Motor neuron (in vitro differentiated cells): ENCODE measurements at regions of chr19 and their contacts with region 1.

Region 1: GRCh38 chr19:9075064-9075949 is 11.6 kb upstream of the OR1M1 start:
- ATAC-seq: peak; percentile 40 to 98 (median 91)
- H3K4me3 ChIP-seq: no peak overlapping the region
- H3K27ac ChIP-seq: peak overlapping the region in 1 of 2 donors; percentile 14
- H3K4me1 ChIP-seq: peaks cover 0 to 13% of the 10 kb centered on the region in 2 donors

Region 2: DNA sequence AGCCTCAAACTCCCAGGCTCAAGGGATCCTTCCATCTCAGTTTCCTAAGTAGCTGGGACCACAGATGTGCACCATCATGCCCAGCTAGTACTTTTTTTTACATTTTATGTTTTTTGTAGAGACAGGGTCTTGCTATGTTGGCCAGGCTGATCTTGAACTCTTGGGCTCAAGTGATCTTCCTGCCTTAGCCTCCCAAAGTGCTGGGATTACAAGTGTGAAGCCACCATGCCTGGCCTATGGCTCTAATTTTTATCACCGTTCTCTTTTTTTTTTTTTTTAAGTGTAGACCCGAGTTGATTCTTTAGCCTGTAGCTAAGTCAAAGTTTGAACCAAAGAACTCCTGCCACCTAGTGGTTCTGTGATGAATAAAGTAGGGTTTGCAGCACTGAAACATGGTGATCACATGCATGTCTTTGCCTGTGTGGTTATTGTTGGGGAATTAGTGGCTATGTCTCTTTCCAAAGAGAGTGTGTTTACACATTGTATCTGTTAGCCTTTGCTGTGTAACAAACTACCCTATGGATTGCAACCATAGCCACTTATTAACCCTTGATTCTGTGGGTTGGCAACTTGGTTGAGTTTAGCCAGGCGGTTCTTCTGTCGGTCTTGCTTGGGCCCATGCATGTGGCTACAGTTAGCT is 433.3 kb before region 1 on chr19:
- in situ Hi-C with region 1: loop called in 1 of 9 experiments (anchors 25 kb)
- ATAC-seq: peak in 3 of 8 experiments; percentile 34 to 78 (median 77)
- H3K4me3 ChIP-seq: no peak overlapping the region
- H3K27ac ChIP-seq: no peak overlapping the region
- H3K4me1 ChIP-seq: no peaks in the 10 kb centered on the region

Region 3: GRCh38 chr19:8654591-8655339 is 420.5 kb before region 1 on chr19:
- in situ Hi-C with region 1: loop called in 4 of 9 experiments (anchors 25 kb)
- ATAC-seq: peak; percentile 27 to 74 (median 62)
- H3K4me3 ChIP-seq: no peak overlapping the region
- H3K27ac ChIP-seq: no peak overlapping the region
- H3K4me1 ChIP-seq: no peaks in the 10 kb centered on the region

Region 4: DNA sequence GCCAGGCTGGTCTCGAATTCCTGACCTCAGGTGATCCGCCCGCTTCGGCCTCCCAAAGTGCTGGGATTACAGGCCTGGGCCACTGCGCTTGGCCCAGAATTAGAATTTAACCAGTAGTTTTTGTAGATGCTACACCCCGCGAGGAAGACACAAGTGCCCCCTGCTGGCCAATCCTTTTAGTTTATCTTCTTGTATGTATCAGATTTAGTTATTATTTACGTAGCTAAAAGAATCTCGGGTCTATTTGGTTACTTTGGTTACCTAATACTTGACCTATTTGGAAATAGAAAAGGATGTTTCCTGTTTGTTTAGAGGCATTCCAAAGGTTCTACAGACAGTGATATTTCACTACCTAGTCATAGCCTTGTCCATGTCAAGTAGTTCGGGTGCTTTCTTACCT is 87.1 kb before region 1 on chr19:
- in situ Hi-C with region 1: no loop called
- ATAC-seq: no peak
- H3K4me3 ChIP-seq: no peak overlapping the region
- H3K27ac ChIP-seq: no peak overlapping the region
- H3K4me1 ChIP-seq: no peaks in the 10 kb centered on the region

Region 5: DNA sequence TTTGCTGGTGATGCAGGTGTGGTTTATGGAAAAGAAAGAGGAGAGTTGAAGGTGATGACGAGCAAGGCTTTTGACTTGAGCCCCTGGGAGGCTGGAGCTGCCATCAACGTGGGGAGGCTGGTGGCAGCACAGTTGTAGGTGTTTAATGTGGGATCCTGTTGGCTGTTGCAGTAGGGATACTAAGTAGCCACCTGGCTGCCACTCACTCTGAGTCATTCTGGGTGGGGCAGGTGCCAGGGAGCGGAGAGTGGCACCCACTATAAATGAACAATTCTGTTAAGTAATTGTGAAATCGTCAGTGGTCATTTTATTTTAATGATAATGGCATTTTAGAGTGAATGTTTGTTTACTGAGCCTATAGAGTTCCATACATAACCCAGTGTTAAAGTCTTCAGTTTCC is 74.7 kb after region 1 on chr19:
- in situ Hi-C with region 1: no loop called
- ATAC-seq: no peak
- H3K4me3 ChIP-seq: no peak overlapping the region
- H3K27ac ChIP-seq: no peak overlapping the region
- H3K4me1 ChIP-seq: no peaks in the 10 kb centered on the region